ENCODE measurements at regions of chr22 and their contacts with region 1.

Region 1: GRCh38 chr22:28600546-28601143 is 79.0 kb downstream of the TTC28 start:
- DNase-seq: no peak
- H3K4me3 ChIP-seq: no peak overlapping the region
- H3K27me3 ChIP-seq: no peaks in the 10 kb centered on the region
- CTCF ChIP-seq: peak; percentile 28; the same call in 1 of the 2 replicates

Region 2: GRCh38 chr22:28728621-28729313 is 128.1 kb after region 1 on chr22:
- CTCF ChIA-PET with region 1: no interaction called
- POLR2A ChIA-PET with region 1: no interaction called
- DNase-seq: no peak
- H3K4me3 ChIP-seq: no peak overlapping the region
- H3K27me3 ChIP-seq: no peaks in the 10 kb centered on the region
- CTCF ChIP-seq: no peak

Region 3: GRCh38 chr22:28829358-28830181 is 228.9 kb after region 1 on chr22:
- CTCF ChIA-PET with region 1: interaction called, 154 read pairs
- POLR2A ChIA-PET with region 1: no interaction called
- DNase-seq: no peak
- H3K4me3 ChIP-seq: no peak overlapping the region
- H3K27me3 ChIP-seq: no peaks in the 10 kb centered on the region
- CTCF ChIP-seq: peak; percentile 92

Region 4: GRCh38 chr22:28835630-28836189 is 235.1 kb after region 1 on chr22:
- CTCF ChIA-PET with region 1: interaction called, 154 read pairs
- POLR2A ChIA-PET with region 1: no interaction called
- DNase-seq: no peak
- H3K4me3 ChIP-seq: no peak overlapping the region
- H3K27me3 ChIP-seq: no peaks in the 10 kb centered on the region
- CTCF ChIP-seq: no peak